ENCODE measurements at regions of chr1 and their contacts with region 1.

Region 1: DNA sequence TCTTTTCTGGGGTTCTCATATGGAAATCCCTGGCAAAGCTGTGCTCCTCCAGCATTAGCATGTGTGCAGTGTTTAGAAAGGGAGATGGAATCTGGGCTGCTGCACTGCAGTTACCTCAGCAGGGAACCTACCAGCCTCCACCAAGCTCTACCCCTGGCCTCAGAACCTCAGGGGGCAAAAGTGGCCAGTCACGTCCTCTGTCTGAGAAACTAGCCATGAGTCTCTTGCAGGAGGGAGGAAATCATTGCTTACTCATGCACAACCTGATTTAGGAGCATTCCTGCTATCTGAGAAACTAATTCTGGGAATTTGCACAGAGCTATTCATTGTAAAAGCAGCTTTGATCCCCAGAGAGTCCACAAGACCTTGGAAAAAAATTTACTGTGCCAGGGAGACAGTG is 80.6 kb upstream of the IPO9 start:
- DNase-seq: peak; percentile 80
- H3K4me3 ChIP-seq: no peak overlapping the region
- CTCF ChIP-seq: no peak

Region 2: DNA sequence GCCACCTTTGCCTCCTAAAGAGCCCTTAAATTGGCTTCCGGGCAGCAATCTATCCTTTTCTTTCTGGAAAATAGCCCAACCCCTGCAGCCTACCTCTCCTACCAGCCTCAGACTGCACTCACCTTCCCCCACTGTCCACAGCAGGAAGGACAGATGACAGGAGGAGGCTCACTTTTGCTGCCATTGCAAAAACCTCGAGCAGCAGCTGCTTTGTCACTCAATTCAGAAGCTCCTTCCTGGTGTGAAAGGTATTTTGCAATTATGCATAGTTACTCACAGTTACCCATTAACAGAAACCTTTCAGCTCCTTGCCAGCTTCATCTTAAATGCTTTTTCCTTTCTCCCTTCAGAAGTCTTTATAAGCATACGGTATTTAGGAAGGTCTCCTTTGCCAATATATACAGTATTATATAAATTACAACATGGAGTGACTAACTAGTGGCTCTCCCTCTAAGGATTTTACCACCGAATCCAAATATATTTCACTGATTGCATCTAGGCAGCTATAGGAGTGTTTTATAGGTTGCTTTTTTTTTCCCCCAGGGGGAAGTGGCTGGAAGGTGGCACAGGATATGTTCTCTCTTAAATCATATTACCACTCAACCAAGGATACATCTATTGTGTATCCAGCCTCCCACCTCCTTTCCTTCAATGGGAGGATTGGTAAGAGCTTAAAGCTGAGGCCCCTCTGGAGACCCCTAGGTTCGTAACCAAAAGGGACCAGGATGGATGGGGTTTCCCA is 61.5 kb before region 1 on chr1:
- in situ Hi-C with region 1: no loop called
- DNase-seq: no peak
- H3K4me3 ChIP-seq: no peak overlapping the region
- CTCF ChIP-seq: no peak

Region 3: DNA sequence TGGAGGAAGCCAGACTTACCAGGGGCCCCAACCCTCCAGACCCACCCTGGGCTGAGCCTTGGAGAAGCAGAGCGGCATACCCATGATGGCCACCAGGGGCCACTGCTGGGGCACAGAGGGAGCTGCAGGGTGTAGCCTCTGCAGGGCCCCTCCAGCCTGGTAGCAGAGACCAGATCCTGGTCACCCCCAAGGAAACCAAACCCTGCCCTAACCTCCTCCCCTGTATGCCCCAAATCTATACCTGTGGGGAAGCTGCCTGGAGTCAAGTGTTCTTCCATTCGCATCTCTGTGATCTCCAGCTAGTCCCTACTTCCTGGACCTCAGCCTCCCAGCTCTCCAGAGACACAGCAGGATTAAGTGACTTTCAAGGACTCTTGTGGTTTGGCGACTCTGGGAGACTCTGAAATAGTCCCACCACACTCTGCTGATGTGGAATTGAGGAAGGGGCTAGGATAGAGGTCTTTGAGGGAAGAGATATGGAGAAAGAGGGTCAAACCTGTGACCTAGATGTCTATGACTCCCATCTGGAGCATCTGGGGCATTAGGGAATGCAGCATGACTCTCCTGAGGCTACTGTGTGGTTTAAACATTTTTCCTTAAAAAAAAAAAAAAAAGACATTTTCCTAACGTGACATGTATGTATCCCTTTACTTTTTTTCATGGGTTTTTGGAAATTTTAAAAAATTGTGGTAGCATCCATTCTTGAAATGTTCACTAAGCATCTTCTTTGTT is 38.6 kb before region 1 on chr1:
- in situ Hi-C with region 1: loop called (anchors 5 kb)
- DNase-seq: no peak
- H3K4me3 ChIP-seq: no peak overlapping the region
- CTCF ChIP-seq: peak; percentile 82

Region 4: GRCh38 chr1:203046984-203047630 is 1298.8 kb after region 1 on chr1:
- in situ Hi-C with region 1: no loop called
- DNase-seq: peak; percentile 18
- H3K4me3 ChIP-seq: no peak overlapping the region
- CTCF ChIP-seq: no peak

Measured in astrocyte of the cerebellum (primary cell).